MCF 10A (cell line): ENCODE measurements at regions of chr1 and their contacts with region 1.

Region 1: GRCh38 chr1:145978854-145979759 is 14.6 kb downstream of the POLR3GL start:
- DNase-seq: peak; percentile 100
- H3K4me3 Mint-ChIP-seq: no peak overlapping the region
- H3K27ac Mint-ChIP-seq: no peak overlapping the region
- H3K4me1 Mint-ChIP-seq: peaks cover 11% of the 10 kb centered on the region
- H3K27me3 Mint-ChIP-seq: no peaks in the 10 kb centered on the region
- CTCF ChIP-seq: peak; percentile 18

Region 2: DNA sequence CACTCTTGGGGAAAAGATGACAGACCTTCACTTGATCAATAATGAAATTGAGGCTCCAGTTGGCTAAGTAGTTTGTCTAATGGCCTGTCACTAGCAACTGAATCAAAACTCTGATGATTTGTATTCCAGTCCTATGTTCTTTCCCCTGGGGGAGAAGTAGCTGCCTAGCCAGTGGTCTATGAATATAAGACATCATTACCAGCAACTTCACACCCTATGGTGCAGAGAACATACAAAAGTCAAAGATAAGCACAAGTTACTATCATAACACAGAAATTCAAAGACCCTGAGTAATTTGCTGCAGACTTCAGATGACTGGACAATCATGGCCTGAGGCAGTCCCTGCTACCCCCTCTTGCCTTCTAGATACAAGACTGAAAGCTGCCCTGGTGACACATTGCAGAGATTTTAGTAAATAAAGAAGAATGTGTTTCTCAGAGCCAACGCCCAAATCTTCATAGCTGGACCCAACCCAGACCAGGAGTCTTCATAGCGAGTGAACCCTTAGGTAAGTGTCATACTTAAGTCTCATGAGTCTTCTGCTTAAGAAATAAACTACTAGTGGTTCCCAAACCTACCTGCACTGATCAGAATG is 272.9 kb before region 1 on chr1:
- CTCF ChIA-PET with region 1: no interaction called
- POLR2A ChIA-PET with region 1: no interaction called
- intact Hi-C with region 1: no loop called
- DNase-seq: peak; percentile 68
- H3K4me3 Mint-ChIP-seq: no peak overlapping the region
- H3K27ac Mint-ChIP-seq: peak overlapping the region; percentile 65
- H3K4me1 Mint-ChIP-seq: peaks cover 26% of the 10 kb centered on the region
- H3K27me3 Mint-ChIP-seq: no peaks in the 10 kb centered on the region
- CTCF ChIP-seq: no peak

Region 3: DNA sequence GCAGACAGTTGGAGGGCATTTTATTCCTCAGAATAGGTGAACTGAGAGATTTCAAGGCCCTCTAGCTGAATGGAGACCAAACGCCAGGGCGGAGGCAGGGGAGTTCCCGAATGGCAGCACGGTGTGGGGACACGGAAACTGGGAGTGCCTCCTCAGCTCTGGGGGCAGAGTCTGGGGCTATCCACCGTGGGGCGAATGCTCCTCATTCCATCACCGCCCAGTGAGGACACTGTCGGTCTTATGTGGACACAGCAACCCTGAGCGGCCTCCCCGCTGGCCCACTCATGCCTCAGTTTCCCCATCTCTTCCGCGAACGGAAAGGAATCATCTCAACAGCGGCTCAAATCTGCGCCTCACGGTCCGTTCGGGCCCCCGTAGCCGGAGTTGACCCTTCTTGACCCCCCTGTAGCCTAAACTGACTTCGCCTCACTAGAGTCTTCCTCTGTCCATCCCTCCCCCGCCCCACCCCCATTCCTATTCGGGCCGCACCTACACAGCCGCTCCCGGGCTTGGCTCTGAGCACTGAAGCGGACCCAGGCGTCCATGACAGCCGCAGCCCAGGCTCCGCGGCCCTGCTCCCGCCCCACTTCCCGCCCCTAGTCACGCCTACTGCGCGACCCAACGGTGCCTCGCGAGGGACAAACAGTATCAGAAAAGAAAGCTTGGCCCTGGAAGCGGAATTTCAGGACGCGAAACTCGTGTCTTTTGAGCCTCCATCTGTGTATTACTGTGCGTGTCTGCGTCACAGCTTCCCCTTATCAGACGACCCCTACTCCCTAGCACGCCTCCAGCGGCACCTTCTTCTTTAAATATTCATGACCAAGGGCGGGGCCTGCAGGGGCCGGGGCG is 60.7 kb before region 1 on chr1 and contains the start of gene PEX11B:
- CTCF ChIA-PET with region 1: interaction called, 6 read pairs
- POLR2A ChIA-PET with region 1: interaction called, 16 read pairs
- intact Hi-C with region 1: no loop called
- DNase-seq: peak; percentile 92
- H3K4me3 Mint-ChIP-seq: peak within 1 kb of the TSS; percentile 94
- H3K27ac Mint-ChIP-seq: peak within 1 kb of the TSS; percentile 99
- H3K4me1 Mint-ChIP-seq: peaks cover 43% of the 10 kb centered on the region
- H3K27me3 Mint-ChIP-seq: no peaks in the 10 kb centered on the region
- CTCF ChIP-seq: no peak
- total RNA-seq, gene PEX11B: 35.5 and 36.2 TPM in 2 replicates

Region 4: GRCh38 chr1:145927063-145927886 is 51.8 kb before region 1 on chr1 and contains the start of gene RBM8A:
- CTCF ChIA-PET with region 1: interaction called, 5 read pairs
- POLR2A ChIA-PET with region 1: interaction called, 12 read pairs
- intact Hi-C with region 1: loop called (anchors 2 kb)
- DNase-seq: peak; percentile 100
- H3K4me3 Mint-ChIP-seq: no peak within 1 kb of the TSS
- H3K27ac Mint-ChIP-seq: no peak within 1 kb of the TSS
- H3K4me1 Mint-ChIP-seq: peaks cover 14% of the 10 kb centered on the region
- H3K27me3 Mint-ChIP-seq: no peaks in the 10 kb centered on the region
- CTCF ChIP-seq: peak; percentile 76
- total RNA-seq, gene RBM8A: 370 and 403 TPM in 2 replicates

Region 5: GRCh38 chr1:146007506-146008133 is 28.5 kb after region 1 on chr1:
- CTCF ChIA-PET with region 1: interaction called, 773 read pairs
- POLR2A ChIA-PET with region 1: interaction called, 1,309 read pairs
- intact Hi-C with region 1: loop called (anchors 1 kb)
- DNase-seq: no peak
- H3K4me3 Mint-ChIP-seq: peak overlapping the region; percentile 64
- H3K27ac Mint-ChIP-seq: peak overlapping the region; percentile 97
- H3K4me1 Mint-ChIP-seq: peaks cover 33% of the 10 kb centered on the region
- H3K27me3 Mint-ChIP-seq: no peaks in the 10 kb centered on the region
- CTCF ChIP-seq: no peak

Region 6: GRCh38 chr1:146012737-146013403 is 33.8 kb after region 1 on chr1:
- CTCF ChIA-PET with region 1: interaction called, 773 read pairs
- POLR2A ChIA-PET with region 1: interaction called, 1,309 read pairs
- intact Hi-C with region 1: loop called (anchors 1 kb)
- DNase-seq: peak; percentile 87
- H3K4me3 Mint-ChIP-seq: no peak overlapping the region
- H3K27ac Mint-ChIP-seq: no peak overlapping the region
- H3K4me1 Mint-ChIP-seq: peaks cover 9% of the 10 kb centered on the region
- H3K27me3 Mint-ChIP-seq: no peaks in the 10 kb centered on the region
- CTCF ChIP-seq: peak; percentile 89